AG04449 (cell line): ENCODE measurements at regions of chr7 and their contacts with region 1.

Region 1: DNA sequence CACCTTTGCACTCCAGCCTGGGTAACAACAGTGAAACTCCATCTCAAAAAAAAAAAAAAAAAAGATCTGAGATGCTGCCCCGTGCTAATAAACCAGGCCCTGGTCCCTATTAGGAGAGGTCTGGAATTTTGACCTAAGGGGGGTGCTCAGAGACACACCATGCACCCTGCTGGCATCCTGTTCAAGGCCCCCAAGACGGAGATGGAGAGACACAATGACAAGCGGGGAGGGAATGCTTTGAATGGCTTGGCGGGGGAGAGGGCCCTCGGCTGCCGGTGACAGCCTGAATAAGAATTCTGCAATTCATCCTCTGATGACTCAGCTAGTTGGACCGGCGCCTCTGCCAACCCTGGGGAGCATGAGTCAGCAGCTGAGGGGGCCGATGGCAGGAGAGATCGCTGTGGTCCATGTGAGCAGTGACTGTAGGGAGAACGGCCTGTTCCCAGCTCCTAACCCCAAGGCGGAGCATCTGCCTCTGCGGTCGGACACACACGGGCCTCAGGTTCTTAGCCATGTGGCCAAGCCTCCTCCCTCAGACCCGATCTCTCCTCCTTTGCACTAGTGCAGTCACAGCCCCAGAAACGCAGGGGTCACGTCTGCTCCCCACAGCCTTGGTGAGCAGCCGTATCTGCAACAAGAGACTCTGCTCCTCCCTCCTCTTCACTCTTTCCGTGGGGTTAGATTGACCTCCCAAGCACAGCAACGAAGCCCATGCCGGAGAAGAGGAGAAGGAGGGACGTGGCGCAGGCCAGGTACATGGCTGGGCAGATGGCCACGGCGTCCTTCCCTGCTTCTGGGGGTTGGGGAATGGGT is 14.9 kb downstream of the TRIM56 start:
- DNase-seq: peak; percentile 93
- H3K4me3 ChIP-seq: peak overlapping the region; percentile 23
- CTCF ChIP-seq: no peak

Region 2: DNA sequence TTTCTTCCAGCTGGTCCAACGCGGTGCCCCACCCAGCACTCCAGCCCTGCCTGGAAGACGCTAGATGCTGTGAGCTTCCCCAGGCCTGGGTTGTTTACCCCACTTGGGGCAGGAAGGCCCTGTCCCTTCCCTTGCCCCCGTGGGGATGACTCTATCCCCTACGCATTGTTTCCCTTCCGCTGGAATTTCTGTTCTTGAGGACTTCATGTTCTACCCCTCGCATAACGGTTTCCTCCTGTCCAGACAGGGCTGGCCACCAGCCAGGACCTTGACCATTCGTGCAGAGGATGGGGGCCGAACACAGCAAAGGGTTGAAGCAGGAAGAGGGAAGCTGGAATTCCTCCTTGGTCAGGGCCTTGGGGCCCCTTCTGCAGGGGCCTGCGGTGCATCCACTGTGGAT is 12.1 kb after region 1 on chr7:
- CTCF ChIA-PET with region 1: interaction called, 24 read pairs
- POLR2A ChIA-PET with region 1: interaction called, 43 read pairs
- DNase-seq: no peak
- H3K4me3 ChIP-seq: no peak overlapping the region
- CTCF ChIP-seq: no peak